Endothelial cell of umbilical vein (primary cell): ENCODE measurements at regions of chr6 and their contacts with region 1.

Region 1: DNA sequence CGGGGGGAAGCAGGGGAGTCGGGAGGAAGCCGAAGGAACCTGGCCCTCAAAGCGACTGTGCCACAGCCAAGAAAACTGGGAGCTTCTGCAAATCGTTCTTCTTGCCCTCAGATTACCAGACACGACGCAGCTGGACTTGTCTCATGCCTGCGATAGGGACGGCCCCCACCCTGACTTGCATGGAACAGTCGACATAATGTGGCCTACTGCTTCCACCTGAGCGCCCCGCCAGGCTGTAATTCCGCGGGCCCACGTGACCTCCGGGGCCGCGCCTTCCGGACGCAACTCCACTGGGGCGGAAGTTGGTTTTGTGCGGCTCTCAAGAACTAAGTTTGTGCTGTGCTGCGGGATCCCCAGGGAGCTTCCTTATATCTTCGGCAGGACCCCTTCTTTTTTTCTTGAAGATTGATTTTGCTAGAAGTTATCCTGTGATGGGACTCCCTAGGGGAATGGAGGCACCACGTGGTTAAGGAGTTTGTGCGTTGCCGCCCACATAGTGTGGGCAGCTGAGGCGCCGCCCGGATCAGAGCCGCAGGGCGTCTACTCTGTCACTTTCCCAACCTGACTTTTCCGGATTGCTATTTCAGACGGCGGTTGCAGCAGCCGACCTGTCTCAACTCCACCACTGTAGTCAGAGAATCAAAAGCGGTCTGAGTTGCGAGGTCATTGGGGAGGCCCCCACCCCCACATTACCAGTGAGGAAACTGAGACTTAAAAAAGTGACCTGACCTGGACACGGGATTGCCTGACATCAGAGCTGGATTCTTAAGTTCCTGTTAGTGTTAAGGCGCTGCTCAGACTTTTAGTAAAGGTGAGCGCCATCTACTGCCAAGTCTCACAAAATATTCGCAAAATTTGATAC is 540 bp upstream of the CD164 start:
- DNase-seq: peak; percentile 94
- H3K4me3 ChIP-seq: peak overlapping the region; percentile 50 to 95 (median 83)
- H3K27ac ChIP-seq: peak overlapping the region; percentile 93
- H3K4me1 ChIP-seq: peaks cover 31% of the 10 kb centered on the region
- H3K27me3 ChIP-seq: peaks cover 0 to 3% of the 10 kb centered on the region in 2 experiments
- CTCF ChIP-seq: peak in 1 of 2 donors; percentile 38
- POLR2A ChIP-seq: peak; percentile 87

Region 2: GRCh38 chr6:108558372-108559096 is 824.3 kb before region 1 on chr6:
- CTCF ChIA-PET with region 1: no interaction called
- POLR2A ChIA-PET with region 1: no interaction called
- dilution Hi-C with region 1: no loop called
- intact Hi-C with region 1: loop called (anchors 2 kb)
- DNase-seq: peak; percentile 99
- H3K4me3 ChIP-seq: peak overlapping the region; percentile 89 to 94 (median 92)
- H3K27ac ChIP-seq: peak overlapping the region; percentile 93
- H3K4me1 ChIP-seq: peaks cover 22% of the 10 kb centered on the region
- H3K27me3 ChIP-seq: peaks cover 3 to 4% of the 10 kb centered on the region in 2 experiments
- CTCF ChIP-seq: no peak
- POLR2A ChIP-seq: no peak

Region 3: GRCh38 chr6:108904741-108905140 is 478.1 kb before region 1 on chr6:
- CTCF ChIA-PET with region 1: no interaction called
- POLR2A ChIA-PET with region 1: no interaction called
- dilution Hi-C with region 1: no loop called
- intact Hi-C with region 1: loop called (anchors 5 kb)
- DNase-seq: no peak
- H3K4me3 ChIP-seq: no peak overlapping the region
- H3K27ac ChIP-seq: no peak overlapping the region
- H3K4me1 ChIP-seq: peaks cover 15% of the 10 kb centered on the region
- H3K27me3 ChIP-seq: no peaks in the 10 kb centered on the region
- CTCF ChIP-seq: no peak
- POLR2A ChIP-seq: no peak

Region 4: GRCh38 chr6:109095027-109095834 is 287.6 kb before region 1 on chr6 and contains the start of gene CEP57L1:
- CTCF ChIA-PET with region 1: interaction called, 11 read pairs
- POLR2A ChIA-PET with region 1: no interaction called
- dilution Hi-C with region 1: no loop called
- intact Hi-C with region 1: loop called (anchors 1 kb)
- DNase-seq: peak; percentile 99
- H3K4me3 ChIP-seq: peak within 1 kb of the TSS; percentile 68 to 100 (median 100)
- H3K27ac ChIP-seq: peak within 1 kb of the TSS; percentile 92
- H3K4me1 ChIP-seq: peaks cover 27% of the 10 kb centered on the region
- H3K27me3 ChIP-seq: no peaks in the 10 kb centered on the region
- CTCF ChIP-seq: peak in 1 of 2 donors; percentile 25
- POLR2A ChIP-seq: peak; percentile 87
- total RNA-seq, gene CEP57L1: 20.9 and 21.0 TPM in 2 replicates

Region 5: GRCh38 chr6:109121411-109121810 is 261.4 kb before region 1 on chr6:
- CTCF ChIA-PET with region 1: no interaction called
- POLR2A ChIA-PET with region 1: no interaction called
- dilution Hi-C with region 1: no loop called
- intact Hi-C with region 1: no loop called
- DNase-seq: peak; percentile 46
- H3K4me3 ChIP-seq: no peak overlapping the region
- H3K27ac ChIP-seq: no peak overlapping the region
- H3K4me1 ChIP-seq: no peaks in the 10 kb centered on the region
- H3K27me3 ChIP-seq: no peaks in the 10 kb centered on the region
- CTCF ChIP-seq: no peak
- POLR2A ChIP-seq: no peak

Region 6: GRCh38 chr6:109236115-109237076 is 146.4 kb before region 1 on chr6:
- CTCF ChIA-PET with region 1: no interaction called
- POLR2A ChIA-PET with region 1: no interaction called
- dilution Hi-C with region 1: no loop called
- intact Hi-C with region 1: loop called (anchors 1 kb)
- DNase-seq: no peak
- H3K4me3 ChIP-seq: no peak overlapping the region
- H3K27ac ChIP-seq: no peak overlapping the region
- H3K4me1 ChIP-seq: peaks cover 9% of the 10 kb centered on the region
- H3K27me3 ChIP-seq: no peaks in the 10 kb centered on the region
- CTCF ChIP-seq: no peak
- POLR2A ChIP-seq: no peak

Region 7: GRCh38 chr6:109411034-109411433 is 28.2 kb after region 1 on chr6:
- CTCF ChIA-PET with region 1: no interaction called
- POLR2A ChIA-PET with region 1: no interaction called
- dilution Hi-C with region 1: no loop called
- intact Hi-C with region 1: no loop called
- DNase-seq: no peak
- H3K4me3 ChIP-seq: no peak overlapping the region
- H3K27ac ChIP-seq: no peak overlapping the region
- H3K4me1 ChIP-seq: no peaks in the 10 kb centered on the region
- H3K27me3 ChIP-seq: peaks cover 3 to 5% of the 10 kb centered on the region in 2 experiments
- CTCF ChIP-seq: no peak
- POLR2A ChIP-seq: no peak

Region 8: DNA sequence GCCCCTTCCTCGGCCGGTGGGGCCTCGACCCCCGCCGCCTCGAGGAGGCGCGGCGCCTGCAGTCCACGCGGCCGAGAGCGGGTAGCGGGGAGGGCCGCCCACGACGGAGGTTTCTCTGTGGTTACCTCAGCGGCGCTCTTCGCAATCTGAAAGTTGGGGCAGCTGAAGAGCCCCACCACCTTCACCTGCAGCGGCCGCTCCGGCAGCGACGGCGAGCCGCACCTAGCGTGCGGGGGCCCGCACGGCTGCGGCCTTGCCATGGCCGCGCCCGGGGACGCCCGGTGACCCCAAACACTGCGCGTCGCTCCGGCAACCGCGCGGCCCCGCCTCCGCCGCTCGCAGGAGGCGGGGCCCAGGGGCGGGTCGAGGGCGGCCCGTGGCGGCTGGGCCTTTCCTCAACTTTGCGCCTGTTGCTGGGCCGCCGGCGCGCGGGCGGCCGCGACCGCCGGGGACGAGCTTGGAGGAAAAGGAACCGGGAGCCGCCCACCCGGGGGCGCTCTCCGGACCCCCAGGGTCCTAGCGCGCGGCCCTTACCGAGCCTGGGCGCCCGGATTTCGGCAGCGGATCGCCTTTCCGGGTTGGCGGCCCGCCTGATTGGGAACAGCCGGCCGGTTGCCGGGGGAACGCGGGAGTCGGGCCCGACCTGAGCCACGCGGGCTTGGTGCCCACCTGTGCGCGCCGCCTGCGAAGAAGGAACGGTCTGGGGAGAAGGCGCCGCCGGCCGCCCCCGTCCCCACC is 57.7 kb after region 1 on chr6 and contains the starts of genes PPIL6 and SMPD2:
- CTCF ChIA-PET with region 1: interaction called, 16 read pairs
- POLR2A ChIA-PET with region 1: no interaction called
- dilution Hi-C with region 1: no loop called
- intact Hi-C with region 1: loop called (anchors 1 kb)
- DNase-seq: peak; percentile 86
- H3K4me3 ChIP-seq: peak within 1 kb of the TSS; percentile 62 to 73 (median 66)
- H3K27ac ChIP-seq: peak within 1 kb of the TSS; percentile 59
- H3K4me1 ChIP-seq: peaks cover 3% of the 10 kb centered on the region
- H3K27me3 ChIP-seq: no peaks in the 10 kb centered on the region
- CTCF ChIP-seq: peak in 1 of 2 donors; percentile 41
- POLR2A ChIP-seq: no peak
- total RNA-seq, gene PPIL6: 0.25 and 0.33 TPM in 2 replicates
- total RNA-seq, gene SMPD2: 6.9 and 8.5 TPM in 2 replicates

Region 9: GRCh38 chr6:109690737-109691621 is 308.2 kb after region 1 on chr6 and contains the starts of genes AK9 and FIG4:
- CTCF ChIA-PET with region 1: no interaction called
- POLR2A ChIA-PET with region 1: no interaction called
- dilution Hi-C with region 1: no loop called
- intact Hi-C with region 1: loop called (anchors 10 kb)
- DNase-seq: peak; percentile 95
- H3K4me3 ChIP-seq: peak within 1 kb of the TSS; percentile 54 to 89 (median 55)
- H3K27ac ChIP-seq: peak within 1 kb of the TSS; percentile 73
- H3K4me1 ChIP-seq: peaks cover 10% of the 10 kb centered on the region
- H3K27me3 ChIP-seq: no peaks in the 10 kb centered on the region
- CTCF ChIP-seq: peak; percentile 10 to 43
- POLR2A ChIP-seq: peak; percentile 63
- total RNA-seq, gene AK9: 3.2 and 4.0 TPM in 2 replicates
- total RNA-seq, gene FIG4: 11.5 and 12.2 TPM in 2 replicates